Activated CD4-positive, alpha-beta T cell treated with anti-CD3 and anti-CD28 coated beads for 36 hours (primary cell): ENCODE measurements at regions of chr1 and their contacts with region 1.

Region 1: DNA sequence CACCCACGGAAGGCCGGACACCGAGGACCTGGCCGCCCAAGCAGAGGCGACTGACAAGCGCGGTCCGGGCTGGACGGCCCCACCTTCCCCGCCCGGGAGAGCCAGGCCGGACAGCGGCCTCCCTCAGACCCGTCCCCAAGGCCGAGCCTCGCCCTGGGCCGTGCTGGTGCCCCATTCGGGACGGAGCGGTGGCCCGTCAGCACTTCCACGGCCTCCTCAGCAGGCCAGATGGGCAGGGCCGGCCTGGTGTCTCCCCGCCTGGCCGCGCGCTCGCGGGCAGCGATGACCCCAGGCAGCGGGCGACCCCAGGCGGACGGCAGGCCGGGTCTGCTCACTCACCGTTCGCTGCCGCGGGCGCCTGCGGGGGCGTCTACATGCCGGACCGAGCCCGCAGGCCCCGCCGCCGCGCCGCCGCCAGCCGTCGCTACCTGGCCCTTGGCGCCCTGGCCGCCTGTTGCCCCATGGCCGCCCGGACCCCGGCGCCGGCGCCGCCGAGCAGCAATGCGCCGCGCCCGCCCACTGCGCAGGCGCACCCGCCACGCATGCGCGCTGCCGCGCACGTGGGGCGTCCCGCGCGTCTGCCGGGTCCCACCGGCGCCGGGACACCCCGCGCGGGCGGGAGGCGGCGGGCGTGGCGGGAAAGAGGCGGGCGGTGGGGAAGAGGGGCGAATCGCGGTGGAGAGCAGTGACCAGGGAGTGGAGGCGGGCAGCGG is at the start of gene NADK:
- DNase-seq: peak; percentile 77
- ATAC-seq: peak; percentile 42
- H3K4me3 Mint-ChIP-seq: peak within 1 kb of the TSS; percentile 78
- H3K27ac Mint-ChIP-seq: peak within 1 kb of the TSS; percentile 83
- H3K4me1 Mint-ChIP-seq: peaks cover 62% of the 10 kb centered on the region
- H3K27me3 Mint-ChIP-seq: no peaks in the 10 kb centered on the region
- total RNA-seq, gene NADK: 53.1 to 56.2 TPM

Region 2: DNA sequence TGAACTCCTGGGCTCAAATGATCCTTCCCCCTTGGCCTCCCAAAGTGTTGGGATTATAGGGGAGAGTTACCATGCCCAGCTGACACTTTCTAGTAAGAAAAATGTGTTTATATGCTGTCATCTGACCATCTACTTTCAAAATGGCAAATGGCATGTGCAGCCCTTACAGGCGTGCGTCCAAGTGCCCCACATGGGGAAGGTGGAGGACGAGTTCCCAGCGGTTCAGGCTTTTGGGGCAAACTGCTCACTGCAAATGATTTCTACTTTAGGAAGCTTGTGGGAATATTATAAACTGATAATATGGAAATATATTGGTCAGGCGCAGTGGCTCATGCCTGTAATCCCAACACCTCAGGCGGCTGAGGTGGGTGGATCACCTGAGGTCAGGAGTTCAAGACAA is 41.7 kb after region 1 on chr1:
- CTCF ChIA-PET with region 1: interaction called, 4 read pairs
- POLR2A ChIA-PET with region 1: no interaction called
- intact Hi-C with region 1: loop called in 1 of 2 experiments (anchors 5 kb)
- DNase-seq: no peak
- ATAC-seq: no peak
- H3K4me3 Mint-ChIP-seq: no peak overlapping the region
- H3K27ac Mint-ChIP-seq: no peak overlapping the region
- H3K4me1 Mint-ChIP-seq: peaks cover 14% of the 10 kb centered on the region
- H3K27me3 Mint-ChIP-seq: no peaks in the 10 kb centered on the region

Region 3: GRCh38 chr1:2049718-2050427 is 271.8 kb after region 1 on chr1 and contains the start of gene PRKCZ:
- CTCF ChIA-PET with region 1: no interaction called
- POLR2A ChIA-PET with region 1: no interaction called
- intact Hi-C with region 1: loop called in 1 of 2 experiments (anchors 1 kb)
- DNase-seq: peak; percentile 95
- ATAC-seq: peak; percentile 98
- H3K4me3 Mint-ChIP-seq: peak within 1 kb of the TSS; percentile 68
- H3K27ac Mint-ChIP-seq: no peak within 1 kb of the TSS
- H3K4me1 Mint-ChIP-seq: peaks cover 24% of the 10 kb centered on the region
- H3K27me3 Mint-ChIP-seq: peaks cover 14% of the 10 kb centered on the region
- total RNA-seq, gene PRKCZ: 9.8 to 10.9 TPM